ENCODE measurements at regions of chr4 and their contacts with region 1.

Region 1: DNA sequence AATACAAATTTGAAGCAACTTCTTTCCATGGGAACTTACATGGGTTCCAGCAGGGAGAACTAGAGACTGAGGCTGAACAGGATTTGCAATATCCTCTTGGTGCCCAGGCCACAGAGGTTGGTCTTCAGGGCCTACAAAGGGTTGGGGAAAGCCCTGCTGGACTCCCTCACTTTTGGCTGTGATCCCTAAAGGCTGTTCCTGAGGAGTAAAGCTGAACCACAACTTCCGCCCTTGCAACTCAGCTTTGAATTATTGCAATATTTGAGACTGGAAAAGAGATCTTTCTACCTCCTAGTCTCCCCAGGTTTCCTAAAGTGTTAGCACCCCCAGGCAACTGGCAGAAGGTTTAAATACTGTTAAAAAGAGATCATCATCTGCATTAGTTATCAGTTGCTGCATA is 26.9 kb downstream of the DCHS2 start:
- DNase-seq: no peak
- H3K4me3 ChIP-seq: no peak overlapping the region
- CTCF ChIP-seq: no peak

Region 2: DNA sequence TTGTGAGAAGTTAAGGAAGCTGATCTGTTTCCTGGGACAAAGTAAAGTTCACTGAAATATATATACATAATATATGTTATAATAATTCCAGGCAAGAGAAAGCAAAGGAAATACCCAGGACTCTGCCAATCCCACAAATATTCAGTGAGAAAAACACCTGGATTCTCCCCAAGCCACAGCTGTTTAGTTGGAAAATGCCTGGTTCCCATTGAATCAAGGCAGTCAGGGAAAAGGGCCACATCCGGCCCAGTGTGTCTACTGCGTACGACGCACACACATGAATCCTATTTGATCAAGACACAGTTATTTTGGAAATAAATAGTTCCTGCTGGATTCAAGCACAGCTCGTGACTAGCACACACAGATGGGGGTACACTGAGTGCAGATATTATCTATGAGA is 33.2 kb after region 1 on chr4:
- in situ Hi-C with region 1: loop called (anchors 5 kb)
- DNase-seq: peak; percentile 55
- H3K4me3 ChIP-seq: no peak overlapping the region
- CTCF ChIP-seq: no peak

Measured in astrocyte of the cerebellum (primary cell).